ENCODE measurements at regions of chr19 and their contacts with region 1.

Region 1: GRCh38 chr19:13861732-13862531 is 15.0 kb upstream of the NANOS3 start:
- DNase-seq: peak in 1 of 2 experiments; percentile 90
- ATAC-seq: peak; percentile 81 to 88
- H3K4me3 ChIP-seq: peak overlapping the region; percentile 33
- H3K27ac ChIP-seq: peak overlapping the region; percentile 92 to 96
- H3K4me1 ChIP-seq: peaks cover 63% of the 10 kb centered on the region
- CTCF ChIP-seq: peak; percentile 76
- EP300 ChIP-seq: peak; percentile 51 to 73; a peak in 2 of 5 replicates
- POLR2A ChIP-seq: no peak
- RAD21 ChIP-seq: peak; percentile 92 to 95

Region 2: DNA sequence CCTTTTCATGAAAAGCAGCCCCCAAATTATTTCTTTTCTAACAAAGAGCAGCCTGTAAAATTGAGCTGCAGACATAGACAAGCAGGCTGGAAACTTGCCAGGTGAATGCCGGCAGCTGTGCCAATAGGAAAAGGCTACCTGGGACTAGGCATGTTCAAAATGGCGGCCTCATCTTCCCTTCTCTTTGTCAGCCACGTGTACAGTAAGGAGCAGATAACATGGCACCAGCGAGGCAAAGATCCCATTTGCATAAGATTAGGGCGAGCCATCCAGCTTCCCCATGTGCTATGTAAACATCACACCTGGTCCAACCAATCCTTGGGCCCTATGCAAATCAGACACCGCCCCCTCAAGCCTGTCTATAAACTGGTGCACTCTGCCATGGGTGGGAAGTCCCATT is 324.5 kb before region 1 on chr19:
- CTCF ChIA-PET with region 1: no interaction called
- POLR2A ChIA-PET with region 1: no interaction called
- DNase-seq: no peak
- ATAC-seq: no peak
- H3K4me3 ChIP-seq: no peak overlapping the region
- H3K27ac ChIP-seq: no peak overlapping the region
- H3K4me1 ChIP-seq: no peaks in the 10 kb centered on the region
- CTCF ChIP-seq: no peak
- EP300 ChIP-seq: no peak
- POLR2A ChIP-seq: no peak
- RAD21 ChIP-seq: no peak

Region 3: DNA sequence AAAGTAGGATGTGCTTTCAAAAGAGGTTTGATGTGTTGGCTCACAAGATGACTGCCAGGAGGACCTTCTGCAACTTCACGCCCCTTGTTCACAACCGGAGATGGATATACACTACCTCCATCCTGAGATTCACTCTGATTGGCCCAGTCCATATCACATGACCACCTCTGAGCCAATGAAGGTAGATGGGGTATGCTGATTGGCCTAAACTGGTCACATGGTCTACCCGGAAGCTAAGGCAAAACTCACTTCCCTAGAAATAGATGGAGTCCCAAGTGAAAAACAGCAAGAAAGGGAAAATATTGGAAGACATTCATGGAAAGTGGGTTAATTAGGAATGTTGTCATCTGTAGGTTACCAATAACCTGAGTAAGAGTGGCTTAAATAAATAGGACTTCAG is 217.3 kb before region 1 on chr19:
- CTCF ChIA-PET with region 1: no interaction called
- POLR2A ChIA-PET with region 1: no interaction called
- DNase-seq: peak in 1 of 2 experiments; percentile 20
- ATAC-seq: no peak
- H3K4me3 ChIP-seq: no peak overlapping the region
- H3K27ac ChIP-seq: no peak overlapping the region
- H3K4me1 ChIP-seq: no peaks in the 10 kb centered on the region
- CTCF ChIP-seq: no peak
- EP300 ChIP-seq: no peak
- POLR2A ChIP-seq: no peak
- RAD21 ChIP-seq: no peak

Region 4: GRCh38 chr19:13784731-13785452 is 77.0 kb before region 1 on chr19:
- CTCF ChIA-PET with region 1: interaction called, 48 read pairs
- POLR2A ChIA-PET with region 1: interaction called, 5 read pairs
- DNase-seq: peak in 1 of 2 experiments; percentile 65
- ATAC-seq: peak; percentile 89 to 92
- H3K4me3 ChIP-seq: no peak overlapping the region
- H3K27ac ChIP-seq: peak overlapping the region; percentile 70 to 88
- H3K4me1 ChIP-seq: peaks cover 24% of the 10 kb centered on the region; the same call in 2 of the 3 replicates
- CTCF ChIP-seq: peak; percentile 58
- EP300 ChIP-seq: no peak
- POLR2A ChIP-seq: no peak
- RAD21 ChIP-seq: peak; percentile 71 to 82

Region 5: DNA sequence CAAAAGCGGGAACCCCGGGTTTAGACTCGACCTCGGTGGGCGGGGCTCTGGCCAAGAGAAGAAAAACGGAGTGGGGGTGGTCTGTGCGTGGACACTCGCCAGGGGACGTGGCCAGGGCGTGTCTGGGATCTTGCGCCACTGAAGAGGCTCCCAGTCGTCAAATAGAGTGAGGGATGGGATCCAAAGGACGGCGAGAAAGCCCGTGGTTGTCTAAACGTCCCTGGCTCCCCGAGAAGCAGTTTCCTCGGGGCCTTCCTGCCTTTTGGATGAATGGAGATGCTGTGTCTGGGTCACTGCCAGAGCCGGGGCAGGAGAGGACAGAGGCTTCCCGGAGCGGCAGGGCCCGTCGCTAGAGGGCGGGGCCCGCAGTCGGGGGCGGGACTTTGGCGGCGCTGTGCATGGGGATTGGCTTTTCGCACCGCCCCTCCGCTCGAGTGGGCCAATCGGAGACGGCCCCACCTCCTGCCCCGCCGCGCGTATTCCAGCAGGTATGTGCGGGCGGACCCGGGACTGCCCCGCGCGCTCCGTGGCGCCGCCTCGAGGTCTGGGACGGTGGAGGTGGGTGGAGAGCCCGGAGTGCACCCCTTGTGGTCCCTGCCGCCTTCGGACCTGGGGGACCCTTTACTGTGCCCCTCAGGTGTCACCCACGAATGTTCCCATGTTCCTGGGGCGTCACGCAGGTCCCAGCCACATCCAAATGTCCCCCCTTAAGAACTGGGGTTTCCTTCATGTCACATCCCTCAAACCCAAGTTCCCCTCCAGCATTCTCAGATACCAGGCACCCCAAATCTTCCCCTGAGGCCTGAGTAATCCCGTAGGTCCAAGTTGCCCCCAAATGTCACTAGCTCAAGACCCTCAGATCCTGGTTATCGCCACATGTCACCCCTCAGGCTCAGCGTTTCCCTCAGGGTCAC is 28.3 kb before region 1 on chr19:
- CTCF ChIA-PET with region 1: interaction called, 271 read pairs
- POLR2A ChIA-PET with region 1: interaction called, 41 read pairs
- DNase-seq: peak; percentile 62 to 91
- ATAC-seq: peak; percentile 44
- H3K4me3 ChIP-seq: 0 out of 3 replicates have a peak overlapping the region, but pooled peaks have one; percentile 6
- H3K27ac ChIP-seq: peak overlapping the region; percentile 100
- H3K4me1 ChIP-seq: peaks cover 55% of the 10 kb centered on the region
- CTCF ChIP-seq: no peak; the same call in 2 of the 3 replicates
- EP300 ChIP-seq: no peak
- POLR2A ChIP-seq: no peak
- RAD21 ChIP-seq: peak; percentile 20 to 31; a peak in 2 of 5 replicates

Region 6: DNA sequence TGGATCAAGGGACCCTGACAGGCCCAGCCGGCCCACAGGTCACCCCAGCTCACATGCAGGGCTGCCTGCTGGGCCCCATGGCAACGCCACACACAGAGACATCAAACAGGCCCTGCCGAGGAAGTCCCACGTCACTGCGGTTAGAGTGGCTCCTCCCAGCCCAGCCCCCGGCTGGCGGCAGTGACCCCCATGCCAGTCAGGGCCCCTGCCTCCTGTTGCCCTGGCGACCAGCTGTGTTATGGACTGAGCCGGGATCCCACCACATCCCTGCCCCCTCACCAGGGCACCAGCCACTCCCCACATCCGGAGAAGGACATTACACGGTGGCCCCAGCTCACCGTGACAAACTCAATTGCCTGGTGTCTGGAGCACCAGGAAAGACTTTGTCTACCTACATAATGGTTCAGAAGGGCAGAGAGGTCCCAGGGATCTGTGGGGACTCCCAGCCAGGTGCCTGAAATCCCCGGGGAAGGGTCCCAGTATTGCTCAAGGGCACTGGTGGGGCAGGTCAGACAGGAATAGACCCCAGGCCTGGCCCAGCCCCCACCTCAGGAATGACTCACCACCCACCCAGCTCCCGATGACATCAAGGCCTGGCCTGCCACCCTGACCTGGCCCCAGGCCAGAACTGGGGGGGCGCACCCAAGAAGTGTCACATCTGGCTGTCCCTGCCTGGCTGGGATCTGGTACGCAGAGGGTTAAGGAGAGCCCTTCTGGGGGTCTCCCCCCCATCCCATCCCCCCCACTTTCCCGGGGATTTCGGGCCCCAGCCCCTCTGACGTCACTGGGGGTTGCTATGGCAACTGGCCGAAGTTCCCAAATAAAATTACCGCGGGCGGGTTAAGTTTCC is 15.2 kb before region 1 on chr19:
- CTCF ChIA-PET with region 1: interaction called, 271 read pairs
- POLR2A ChIA-PET with region 1: interaction called, 41 read pairs
- DNase-seq: peak; percentile 78 to 97
- ATAC-seq: peak; percentile 49 to 52
- H3K4me3 ChIP-seq: peak overlapping the region; percentile 41
- H3K27ac ChIP-seq: peak overlapping the region; percentile 100
- H3K4me1 ChIP-seq: peaks cover 71% of the 10 kb centered on the region
- CTCF ChIP-seq: no peak
- EP300 ChIP-seq: peak; percentile 28 to 47; a peak in 3 of 5 replicates
- POLR2A ChIP-seq: 0 out of 2 replicates have a peak, but pooled peaks have one; percentile 18
- RAD21 ChIP-seq: 0 out of 5 replicates have a peak, but pooled peaks of 1 of the 2 experiments have one; percentile 5

Measured in A549 (cell line).